Activated naive CD4-positive, alpha-beta T cell treated with anti-CD3 and anti-CD28 coated beads for 36 hours (primary cell): ENCODE measurements at regions of chr3 and their contacts with region 1.

Region 1: DNA sequence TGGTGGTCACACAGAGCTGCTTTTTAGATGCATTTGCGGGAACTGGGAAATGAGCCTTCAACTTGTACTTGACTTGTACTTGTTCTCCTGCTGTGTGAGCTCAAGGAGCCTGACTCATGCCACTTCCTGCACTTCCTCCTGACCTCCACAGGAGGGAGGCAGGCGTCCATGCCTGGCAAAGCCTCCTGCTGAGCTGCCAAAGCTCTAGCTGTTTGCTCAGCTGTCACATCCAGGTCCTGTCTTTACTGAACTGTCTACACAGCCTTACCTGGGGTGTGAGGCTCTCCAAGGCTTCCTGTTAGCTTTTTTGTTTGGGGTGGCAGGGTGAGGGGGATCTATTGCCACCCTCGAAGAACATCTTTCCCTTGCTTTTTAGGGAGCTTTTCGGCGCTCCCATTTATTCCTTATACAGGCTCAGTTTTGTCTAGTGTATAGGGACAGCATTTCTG is 6.4 kb downstream of the THPO start:
- DNase-seq: peak; percentile 80
- H3K4me3 Mint-ChIP-seq: no peak overlapping the region
- H3K27ac Mint-ChIP-seq: no peak overlapping the region
- H3K4me1 Mint-ChIP-seq: peaks cover 16% of the 10 kb centered on the region
- H3K27me3 Mint-ChIP-seq: no peaks in the 10 kb centered on the region

Region 2: GRCh38 chr3:184354121-184354728 is 17.4 kb before region 1 on chr3:
- CTCF ChIA-PET with region 1: interaction called, 12 read pairs
- intact Hi-C with region 1: no loop called
- DNase-seq: peak; percentile 76
- H3K4me3 Mint-ChIP-seq: no peak overlapping the region
- H3K27ac Mint-ChIP-seq: no peak overlapping the region
- H3K4me1 Mint-ChIP-seq: no peaks in the 10 kb centered on the region
- H3K27me3 Mint-ChIP-seq: no peaks in the 10 kb centered on the region

Region 3: DNA sequence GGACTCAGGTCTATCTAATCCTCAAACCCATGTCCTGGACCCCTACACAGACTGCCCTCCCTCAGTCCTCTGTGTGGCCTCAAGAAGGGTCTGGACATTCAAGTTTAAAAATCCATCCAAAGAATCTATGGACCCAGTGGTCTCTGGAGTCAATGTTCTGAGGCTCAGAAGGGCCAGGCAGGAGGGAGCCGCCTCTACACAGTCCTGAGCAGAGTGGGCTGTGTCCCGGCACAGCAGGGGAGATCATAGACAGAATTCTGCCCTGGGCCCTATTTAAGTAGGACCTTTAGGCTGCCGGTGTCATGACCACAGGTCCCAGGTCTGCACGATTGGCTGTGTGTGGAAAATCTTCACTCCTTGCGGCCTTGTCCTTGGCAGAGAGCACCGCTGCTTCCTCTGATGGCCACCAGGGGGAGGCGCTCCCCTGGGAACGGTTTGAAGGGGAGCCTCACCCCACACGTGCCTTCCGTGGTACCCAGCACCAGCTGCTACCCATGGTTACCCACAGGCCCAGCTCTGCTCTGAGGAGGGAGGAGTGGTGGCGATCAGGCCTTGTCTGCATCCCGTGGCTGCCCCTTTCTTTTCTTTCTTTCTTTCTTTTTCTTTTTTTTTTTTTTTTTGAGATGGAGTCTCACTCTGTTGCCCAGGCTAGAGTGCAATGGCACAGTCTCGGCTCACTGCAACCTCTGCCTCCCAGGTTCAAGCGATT is 46.2 kb after region 1 on chr3:
- CTCF ChIA-PET with region 1: interaction called, 20 read pairs
- intact Hi-C with region 1: loop called (anchors 1 kb)
- DNase-seq: peak; percentile 78
- H3K4me3 Mint-ChIP-seq: no peak overlapping the region
- H3K27ac Mint-ChIP-seq: no peak overlapping the region
- H3K4me1 Mint-ChIP-seq: no peaks in the 10 kb centered on the region
- H3K27me3 Mint-ChIP-seq: no peaks in the 10 kb centered on the region

Region 4: DNA sequence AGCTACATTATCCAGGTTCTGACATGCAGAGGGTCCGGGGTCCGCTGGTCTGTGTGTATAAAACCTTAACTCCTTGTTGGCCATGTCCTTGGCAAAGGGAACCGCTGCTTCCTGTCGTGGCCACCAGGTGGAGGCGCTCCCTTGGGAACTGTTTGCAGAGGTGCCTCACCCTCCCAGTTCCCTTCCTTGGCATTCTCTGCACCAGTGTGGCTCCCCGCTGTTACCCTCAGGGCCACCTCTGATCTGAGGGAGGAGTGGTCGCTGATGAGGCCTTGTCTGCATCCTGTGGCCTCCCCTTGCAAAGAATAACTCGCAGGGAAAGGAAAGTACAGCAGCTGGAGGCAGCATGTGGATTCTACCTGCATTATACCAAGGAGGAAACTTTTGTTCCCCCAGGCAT is 97.8 kb after region 1 on chr3:
- CTCF ChIA-PET with region 1: interaction called, 13 read pairs
- intact Hi-C with region 1: loop called (anchors 2 kb)
- DNase-seq: peak; percentile 68
- H3K4me3 Mint-ChIP-seq: no peak overlapping the region
- H3K27ac Mint-ChIP-seq: no peak overlapping the region
- H3K4me1 Mint-ChIP-seq: peaks cover 20% of the 10 kb centered on the region
- H3K27me3 Mint-ChIP-seq: peaks cover 11% of the 10 kb centered on the region

Region 5: DNA sequence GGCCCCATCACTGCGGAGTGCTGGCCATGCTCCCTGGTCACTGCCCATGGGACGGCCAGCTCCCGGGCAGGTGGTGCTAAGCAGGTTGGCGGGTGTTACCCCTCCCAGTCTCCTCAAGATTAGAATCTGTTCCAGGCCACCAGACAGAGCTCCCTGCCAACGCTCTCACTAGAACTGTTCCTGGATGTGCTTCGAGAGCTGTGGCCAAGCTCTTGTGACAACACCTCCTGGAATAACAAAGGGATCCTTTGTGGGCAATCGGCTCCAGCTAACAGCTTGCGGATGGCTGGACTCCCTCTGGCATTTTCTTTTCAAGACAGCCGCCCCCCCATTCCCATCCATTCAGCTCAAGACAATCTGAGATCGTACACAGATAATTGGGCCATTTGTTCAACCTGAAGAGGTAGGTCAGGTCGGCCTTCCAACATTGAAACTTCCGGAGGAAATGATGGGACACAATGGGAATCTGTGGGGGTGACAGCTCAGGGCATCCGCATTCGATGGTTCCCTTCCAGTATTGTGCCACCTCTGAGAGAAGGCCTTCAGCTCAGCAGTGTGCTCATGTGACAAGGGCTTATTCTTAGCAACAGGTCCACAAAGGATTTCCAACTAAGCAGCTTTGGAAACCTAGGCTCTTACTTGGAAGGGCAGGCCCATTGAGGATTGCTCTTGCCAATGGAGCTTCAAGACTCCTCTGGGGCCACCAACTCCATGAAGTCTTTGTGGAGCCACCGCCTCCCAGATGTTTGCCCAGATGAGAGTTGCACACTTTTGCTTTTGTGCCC is 178.4 kb after region 1 on chr3:
- CTCF ChIA-PET with region 1: interaction called, 13 read pairs
- intact Hi-C with region 1: no loop called
- DNase-seq: no peak
- H3K4me3 Mint-ChIP-seq: no peak overlapping the region
- H3K27ac Mint-ChIP-seq: no peak overlapping the region
- H3K4me1 Mint-ChIP-seq: peaks cover 17% of the 10 kb centered on the region
- H3K27me3 Mint-ChIP-seq: no peaks in the 10 kb centered on the region

Region 6: GRCh38 chr3:184583578-184584425 is 212.2 kb after region 1 on chr3:
- CTCF ChIA-PET with region 1: no interaction called
- intact Hi-C with region 1: no loop called
- DNase-seq: no peak
- H3K4me3 Mint-ChIP-seq: peak overlapping the region; percentile 12
- H3K27ac Mint-ChIP-seq: no peak overlapping the region
- H3K4me1 Mint-ChIP-seq: no peaks in the 10 kb centered on the region
- H3K27me3 Mint-ChIP-seq: peaks cover 19% of the 10 kb centered on the region